Activated CD4-positive, alpha-beta memory T cell treated with anti-CD3 and anti-CD28 coated beads for 36 hours (primary cell): ENCODE measurements at regions of chr1 and their contacts with region 1.

Region 1: GRCh38 chr1:153572569-153573015 is 6.9 kb upstream of the S100A2 start:
- DNase-seq: peak; percentile 83
- H3K4me3 Mint-ChIP-seq: no peak overlapping the region
- H3K27ac Mint-ChIP-seq: peak overlapping the region; percentile 64
- H3K4me1 Mint-ChIP-seq: peaks cover 54% of the 10 kb centered on the region
- H3K27me3 Mint-ChIP-seq: peaks cover 9% of the 10 kb centered on the region

Region 2: DNA sequence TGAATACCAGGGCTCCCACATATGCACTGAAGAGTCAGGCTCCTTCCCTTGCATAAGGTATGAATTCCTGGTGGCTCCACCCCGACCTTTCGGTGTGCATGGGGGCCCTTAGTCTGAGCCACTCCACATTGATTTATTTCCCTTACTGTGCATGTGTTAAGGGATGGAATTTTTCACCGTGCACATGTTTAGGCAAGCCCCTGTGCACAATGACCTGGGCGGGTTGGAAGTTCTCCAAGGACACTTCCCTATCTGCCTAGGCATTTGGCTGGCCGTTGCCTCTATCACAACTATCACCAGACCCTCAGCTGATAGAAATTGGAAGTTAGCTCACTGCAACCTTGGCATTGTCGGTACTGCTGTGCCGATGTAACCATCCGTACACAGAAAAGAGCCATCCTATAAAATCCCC is 46.5 kb before region 1 on chr1:
- CTCF ChIA-PET with region 1: interaction called, 269 read pairs
- POLR2A ChIA-PET with region 1: interaction called, 99 read pairs
- intact Hi-C with region 1: no loop called
- DNase-seq: no peak
- H3K4me3 Mint-ChIP-seq: no peak overlapping the region
- H3K27ac Mint-ChIP-seq: no peak overlapping the region
- H3K4me1 Mint-ChIP-seq: peaks cover 14% of the 10 kb centered on the region
- H3K27me3 Mint-ChIP-seq: no peaks in the 10 kb centered on the region

Region 3: DNA sequence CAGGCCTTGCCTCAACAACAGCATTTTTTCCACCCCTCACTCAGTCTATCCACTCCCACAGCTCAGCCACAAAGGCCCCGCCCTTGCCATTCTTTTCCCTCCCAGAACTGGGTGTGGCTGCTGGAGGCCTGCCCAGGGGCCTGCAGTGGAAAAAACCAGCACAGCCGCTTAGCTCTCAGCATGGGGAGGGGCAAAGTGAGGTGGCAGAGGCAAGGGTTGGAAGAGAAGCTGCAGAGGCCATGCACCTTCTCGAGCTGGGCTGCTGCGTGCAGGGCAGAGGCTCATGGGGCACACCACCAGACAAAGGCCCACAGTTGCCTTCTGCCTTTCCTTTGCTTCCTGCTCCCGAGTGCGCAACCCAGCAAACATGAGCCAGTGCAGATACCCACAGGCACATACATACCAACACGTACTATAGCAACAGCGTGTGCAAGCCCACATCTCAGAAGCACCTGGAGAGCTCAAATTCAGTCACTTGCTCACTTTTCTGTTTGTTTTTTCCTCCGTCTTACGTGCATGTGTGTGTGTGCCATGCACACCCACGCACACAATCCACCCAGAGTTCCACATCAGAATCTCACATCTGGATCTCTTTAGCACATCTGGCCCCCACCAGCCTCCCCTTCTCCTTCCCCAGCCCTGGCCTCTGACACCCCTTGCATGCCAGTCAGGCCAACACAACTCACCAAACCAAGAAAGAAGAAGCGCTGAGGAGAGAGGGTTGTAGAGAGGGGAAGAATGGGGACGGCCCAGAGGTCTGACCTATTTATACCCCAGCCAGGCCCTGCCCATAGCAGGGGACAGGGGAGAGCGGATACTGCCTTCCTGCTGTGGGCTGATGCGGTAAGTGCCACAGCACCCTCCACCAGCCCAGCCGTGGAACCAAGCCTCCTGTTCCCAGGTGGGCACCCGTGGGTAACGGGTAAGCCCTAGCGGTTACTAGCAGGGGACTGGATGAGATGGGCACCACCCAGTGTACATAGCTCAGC is 27.2 kb before region 1 on chr1 and contains the start of gene S100A4:
- CTCF ChIA-PET with region 1: interaction called, 49 read pairs
- POLR2A ChIA-PET with region 1: interaction called, 13 read pairs
- intact Hi-C with region 1: no loop called
- DNase-seq: peak; percentile 98
- H3K4me3 Mint-ChIP-seq: peak within 1 kb of the TSS; percentile 92
- H3K27ac Mint-ChIP-seq: peak within 1 kb of the TSS; percentile 99
- H3K4me1 Mint-ChIP-seq: peaks cover 74% of the 10 kb centered on the region
- H3K27me3 Mint-ChIP-seq: no peaks in the 10 kb centered on the region
- total RNA-seq, gene S100A4: 352 to 382 TPM

Region 4: GRCh38 chr1:153617675-153618074 is 45.1 kb after region 1 on chr1:
- CTCF ChIA-PET with region 1: interaction called, 39 read pairs
- POLR2A ChIA-PET with region 1: interaction called, 6 read pairs
- intact Hi-C with region 1: loop called (anchors 1 kb)
- DNase-seq: peak; percentile 80
- H3K4me3 Mint-ChIP-seq: no peak overlapping the region
- H3K27ac Mint-ChIP-seq: no peak overlapping the region
- H3K4me1 Mint-ChIP-seq: no peaks in the 10 kb centered on the region
- H3K27me3 Mint-ChIP-seq: no peaks in the 10 kb centered on the region

Region 5: GRCh38 chr1:153633716-153634665 is 61.4 kb after region 1 on chr1 and contains the start of gene CHTOP:
- CTCF ChIA-PET with region 1: interaction called, 26 read pairs
- POLR2A ChIA-PET with region 1: interaction called, 19 read pairs
- intact Hi-C with region 1: loop called (anchors 1 kb)
- DNase-seq: peak; percentile 98
- H3K4me3 Mint-ChIP-seq: peak within 1 kb of the TSS; percentile 92
- H3K27ac Mint-ChIP-seq: peak within 1 kb of the TSS; percentile 100
- H3K4me1 Mint-ChIP-seq: peaks cover 45% of the 10 kb centered on the region
- H3K27me3 Mint-ChIP-seq: no peaks in the 10 kb centered on the region
- total RNA-seq, gene CHTOP: 92.5 to 94.7 TPM

Region 6: GRCh38 chr1:153670859-153671627 is 98.5 kb after region 1 on chr1 and contains the start of gene ILF2:
- CTCF ChIA-PET with region 1: interaction called, 6 read pairs
- POLR2A ChIA-PET with region 1: no interaction called
- intact Hi-C with region 1: loop called (anchors 1 kb)
- DNase-seq: peak; percentile 99
- H3K4me3 Mint-ChIP-seq: no peak within 1 kb of the TSS
- H3K27ac Mint-ChIP-seq: no peak within 1 kb of the TSS
- H3K4me1 Mint-ChIP-seq: peaks cover 31% of the 10 kb centered on the region
- H3K27me3 Mint-ChIP-seq: no peaks in the 10 kb centered on the region
- total RNA-seq, gene ILF2: 315 to 323 TPM

Region 7: GRCh38 chr1:153783233-153784190 is 210.9 kb after region 1 on chr1:
- CTCF ChIA-PET with region 1: no interaction called
- POLR2A ChIA-PET with region 1: no interaction called
- intact Hi-C with region 1: loop called (anchors 5 kb)
- DNase-seq: peak; percentile 95
- H3K4me3 Mint-ChIP-seq: peak overlapping the region; percentile 83
- H3K27ac Mint-ChIP-seq: peak overlapping the region; percentile 86
- H3K4me1 Mint-ChIP-seq: peaks cover 4% of the 10 kb centered on the region
- H3K27me3 Mint-ChIP-seq: no peaks in the 10 kb centered on the region

Region 8: DNA sequence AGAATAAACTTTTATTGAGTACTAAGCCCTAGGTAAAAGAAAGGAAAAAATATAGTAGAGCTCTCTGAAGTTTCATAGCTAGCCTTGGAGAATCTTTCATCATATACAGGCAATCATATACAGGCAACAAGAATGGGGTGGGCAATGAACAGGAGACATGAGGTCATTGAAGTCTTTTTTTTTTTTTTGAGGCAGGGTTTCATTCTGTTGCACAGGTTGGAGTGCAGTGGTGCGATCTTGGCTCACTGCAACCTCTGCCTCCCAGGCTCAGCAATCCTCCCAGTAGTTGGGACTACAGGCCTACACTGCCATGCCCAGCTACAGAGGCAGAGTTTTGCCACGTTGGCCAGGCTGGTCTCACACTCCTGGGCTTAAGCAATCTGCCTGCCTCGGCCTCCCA is 1770.2 kb after region 1 on chr1:
- CTCF ChIA-PET with region 1: no interaction called
- POLR2A ChIA-PET with region 1: no interaction called
- intact Hi-C with region 1: no loop called
- DNase-seq: no peak
- H3K4me3 Mint-ChIP-seq: no peak overlapping the region
- H3K27ac Mint-ChIP-seq: no peak overlapping the region
- H3K4me1 Mint-ChIP-seq: no peaks in the 10 kb centered on the region
- H3K27me3 Mint-ChIP-seq: no peaks in the 10 kb centered on the region